Naive thymus-derived CD4-positive, alpha-beta T cell (primary cell): ENCODE measurements at regions of chr10 and their contacts with region 1.

Region 1: GRCh38 chr10:3972460-3973301 is 187.7 kb upstream of the KLF6 start:
- DNase-seq: peak in 7 of 9 donors; percentile 8 to 47 (median 35)
- ATAC-seq: peak; percentile 89
- H3K4me3 ChIP-seq: peak overlapping the region; percentile 36
- H3K4me3 Mint-ChIP-seq: peak overlapping the region; percentile 63 to 89 (median 82)
- H3K27ac ChIP-seq: peak overlapping the region; percentile 66
- H3K27ac Mint-ChIP-seq: peak overlapping the region; percentile 86 to 98 (median 96)
- H3K4me1 ChIP-seq: peaks cover 56 to 71% of the 10 kb centered on the region in 2 donors
- H3K4me1 Mint-ChIP-seq: peaks cover 38 to 61% (median 54%) of the 10 kb centered on the region in 7 donors
- H3K27me3 ChIP-seq: no peaks in the 10 kb centered on the region
- H3K27me3 Mint-ChIP-seq: no peaks in the 10 kb centered on the region

Region 2: GRCh38 chr10:3776796-3777571 is 195.7 kb before region 1 on chr10:
- CTCF ChIA-PET with region 1: no interaction called
- POLR2A ChIA-PET with region 1: interaction called, 4 read pairs
- intact Hi-C with region 1: loop called (anchors 2 to 5 kb)
- DNase-seq: peak in 7 of 9 donors; percentile 41 to 84 (median 67)
- ATAC-seq: peak; percentile 31
- H3K4me3 ChIP-seq: no peak overlapping the region
- H3K4me3 Mint-ChIP-seq: peak overlapping the region in 9 of 10 donors; percentile 7 to 81 (median 51)
- H3K27ac ChIP-seq: peak overlapping the region; percentile 70
- H3K27ac Mint-ChIP-seq: peak overlapping the region; percentile 59 to 99 (median 83)
- H3K4me1 ChIP-seq: peaks cover 53 to 71% of the 10 kb centered on the region in 2 donors
- H3K4me1 Mint-ChIP-seq: peaks cover 50 to 66% (median 64%) of the 10 kb centered on the region in 7 donors
- H3K27me3 ChIP-seq: no peaks in the 10 kb centered on the region
- H3K27me3 Mint-ChIP-seq: no peaks in the 10 kb centered on the region

Region 3: DNA sequence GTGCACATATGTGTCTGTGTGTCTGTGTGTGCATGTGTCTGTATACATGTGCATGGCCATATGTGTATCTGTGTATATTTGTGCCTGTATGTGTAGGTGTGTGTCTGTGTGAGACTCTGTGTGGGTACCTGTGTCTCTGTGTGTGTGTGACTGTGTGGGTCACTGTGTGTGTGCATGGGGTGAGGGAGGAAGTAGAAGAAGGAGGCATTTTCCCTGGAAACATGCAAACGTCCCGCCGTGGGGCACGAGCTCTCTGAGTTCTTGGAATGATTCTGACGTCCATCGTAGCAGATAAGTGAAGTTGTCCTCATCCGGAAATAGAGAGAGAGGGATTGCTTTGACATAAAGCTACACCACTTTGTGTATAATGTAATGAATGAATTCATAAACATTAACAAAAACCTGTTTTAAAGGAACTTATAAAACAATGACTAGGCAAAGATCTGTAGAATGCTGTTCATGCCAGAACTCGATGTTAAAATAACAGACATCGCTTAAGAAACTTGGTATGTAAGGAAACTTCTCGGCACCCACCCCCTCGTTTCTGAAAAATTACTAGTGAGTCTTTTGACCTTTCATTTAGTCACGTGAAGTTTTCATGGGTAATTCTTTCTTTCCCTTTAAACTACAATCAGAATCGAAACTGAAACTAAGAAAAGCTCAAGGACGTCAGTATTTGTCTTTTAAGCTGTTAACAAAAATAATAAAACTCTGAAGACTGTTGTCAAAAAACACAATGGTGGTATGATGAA is 144.1 kb before region 1 on chr10:
- CTCF ChIA-PET with region 1: no interaction called
- POLR2A ChIA-PET with region 1: no interaction called
- intact Hi-C with region 1: loop called in 1 of 2 experiments (anchors 2 kb)
- DNase-seq: peak in 6 of 9 donors; percentile 40 to 66 (median 54)
- ATAC-seq: peak; percentile 63
- H3K4me3 ChIP-seq: peak overlapping the region; percentile 65
- H3K4me3 Mint-ChIP-seq: peak overlapping the region; percentile 73 to 88 (median 78)
- H3K27ac ChIP-seq: peak overlapping the region; percentile 73
- H3K27ac Mint-ChIP-seq: peak overlapping the region; percentile 80 to 92 (median 90)
- H3K4me1 ChIP-seq: peaks cover 15 to 17% of the 10 kb centered on the region in 2 donors
- H3K4me1 Mint-ChIP-seq: peaks cover 12 to 54% (median 22%) of the 10 kb centered on the region in 7 donors
- H3K27me3 ChIP-seq: no peaks in the 10 kb centered on the region
- H3K27me3 Mint-ChIP-seq: no peaks in the 10 kb centered on the region

Region 4: DNA sequence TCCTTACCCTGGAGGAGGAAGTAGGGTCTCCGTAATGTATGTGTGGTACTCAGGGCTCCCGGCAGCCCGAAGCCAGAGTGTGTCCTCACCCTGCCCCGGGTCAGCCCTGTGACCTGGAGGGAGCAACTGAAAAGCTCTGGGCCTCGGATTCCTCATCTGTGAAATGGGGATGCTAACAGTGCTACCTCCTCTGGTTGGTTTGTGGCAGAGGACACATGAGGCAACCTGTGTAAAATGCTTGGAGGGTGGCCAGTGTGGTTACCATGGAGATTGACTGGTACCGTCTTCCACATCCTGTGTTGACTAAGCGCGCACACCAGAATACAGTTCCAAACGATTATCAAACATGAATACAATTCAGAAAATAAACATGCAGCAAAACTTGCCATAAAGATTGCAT is 23.8 kb before region 1 on chr10:
- CTCF ChIA-PET with region 1: no interaction called
- POLR2A ChIA-PET with region 1: interaction called, 8 read pairs
- intact Hi-C with region 1: loop called (anchors 1 to 2 kb)
- DNase-seq: peak; percentile 21 to 79 (median 61)
- ATAC-seq: peak; percentile 94
- H3K4me3 ChIP-seq: no peak overlapping the region
- H3K4me3 Mint-ChIP-seq: peak overlapping the region in 9 of 10 donors; percentile 16 to 67 (median 47)
- H3K27ac ChIP-seq: no peak overlapping the region
- H3K27ac Mint-ChIP-seq: peak overlapping the region; percentile 32 to 97 (median 78)
- H3K4me1 ChIP-seq: peaks cover 20 to 59% of the 10 kb centered on the region in 2 donors
- H3K4me1 Mint-ChIP-seq: peaks cover 14 to 60% (median 36%) of the 10 kb centered on the region in 7 donors
- H3K27me3 ChIP-seq: no peaks in the 10 kb centered on the region
- H3K27me3 Mint-ChIP-seq: no peaks in the 10 kb centered on the region

Region 5: DNA sequence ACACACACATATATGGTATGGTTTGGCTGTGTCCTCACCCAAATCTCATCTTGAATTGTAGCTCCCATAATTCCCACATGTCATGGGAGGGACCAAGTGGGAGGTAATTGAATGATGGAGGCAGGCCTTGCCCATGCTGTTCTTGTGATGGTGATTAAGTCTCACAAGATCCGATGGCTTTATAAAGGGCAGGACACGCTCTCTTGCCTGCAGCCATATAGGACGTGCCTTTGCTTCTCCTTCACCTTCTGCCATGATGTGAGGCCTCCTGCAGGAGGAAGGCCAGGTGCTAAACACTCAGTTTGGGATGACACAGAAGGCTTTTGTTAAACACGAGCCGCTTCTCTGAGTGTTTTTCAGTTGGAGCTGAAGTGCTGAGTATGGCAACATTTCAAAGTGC is 17.6 kb after region 1 on chr10:
- CTCF ChIA-PET with region 1: no interaction called
- POLR2A ChIA-PET with region 1: no interaction called
- intact Hi-C with region 1: no loop called
- DNase-seq: no peak
- ATAC-seq: no peak
- H3K4me3 ChIP-seq: no peak overlapping the region
- H3K4me3 Mint-ChIP-seq: no peak overlapping the region
- H3K27ac ChIP-seq: no peak overlapping the region
- H3K27ac Mint-ChIP-seq: no peak overlapping the region
- H3K4me1 ChIP-seq: no peaks in the 10 kb centered on the region
- H3K4me1 Mint-ChIP-seq: peaks cover 0 to 16% (median 6%) of the 10 kb centered on the region in 7 donors
- H3K27me3 ChIP-seq: no peaks in the 10 kb centered on the region
- H3K27me3 Mint-ChIP-seq: no peaks in the 10 kb centered on the region

Region 6: GRCh38 chr10:4067531-4067930 is 94.8 kb after region 1 on chr10:
- CTCF ChIA-PET with region 1: no interaction called
- POLR2A ChIA-PET with region 1: no interaction called
- intact Hi-C with region 1: no loop called
- DNase-seq: peak in 1 of 9 donors; percentile 34
- ATAC-seq: peak; percentile 40
- H3K4me3 ChIP-seq: no peak overlapping the region
- H3K4me3 Mint-ChIP-seq: no peak overlapping the region
- H3K27ac ChIP-seq: no peak overlapping the region
- H3K27ac Mint-ChIP-seq: no peak overlapping the region
- H3K4me1 ChIP-seq: no peaks in the 10 kb centered on the region
- H3K4me1 Mint-ChIP-seq: peaks cover 0 to 23% (median 0%) of the 10 kb centered on the region in 7 donors
- H3K27me3 ChIP-seq: no peaks in the 10 kb centered on the region
- H3K27me3 Mint-ChIP-seq: no peaks in the 10 kb centered on the region

Region 7: GRCh38 chr10:4131407-4132228 is 158.9 kb after region 1 on chr10:
- CTCF ChIA-PET with region 1: no interaction called
- POLR2A ChIA-PET with region 1: no interaction called
- intact Hi-C with region 1: loop called (anchors 2 to 5 kb)
- DNase-seq: peak in 7 of 9 donors; percentile 31 to 65 (median 58)
- ATAC-seq: peak; percentile 90
- H3K4me3 ChIP-seq: peak overlapping the region; percentile 29
- H3K4me3 Mint-ChIP-seq: no peak overlapping the region
- H3K27ac ChIP-seq: no peak overlapping the region
- H3K27ac Mint-ChIP-seq: no peak overlapping the region
- H3K4me1 ChIP-seq: peaks cover 22 to 33% of the 10 kb centered on the region in 2 donors
- H3K4me1 Mint-ChIP-seq: peaks cover under 1 to 34% (median 8%) of the 10 kb centered on the region in 7 donors
- H3K27me3 ChIP-seq: no peaks in the 10 kb centered on the region
- H3K27me3 Mint-ChIP-seq: no peaks in the 10 kb centered on the region